ENCODE measurements at regions of chr20 and their contacts with region 1.

Region 1: DNA sequence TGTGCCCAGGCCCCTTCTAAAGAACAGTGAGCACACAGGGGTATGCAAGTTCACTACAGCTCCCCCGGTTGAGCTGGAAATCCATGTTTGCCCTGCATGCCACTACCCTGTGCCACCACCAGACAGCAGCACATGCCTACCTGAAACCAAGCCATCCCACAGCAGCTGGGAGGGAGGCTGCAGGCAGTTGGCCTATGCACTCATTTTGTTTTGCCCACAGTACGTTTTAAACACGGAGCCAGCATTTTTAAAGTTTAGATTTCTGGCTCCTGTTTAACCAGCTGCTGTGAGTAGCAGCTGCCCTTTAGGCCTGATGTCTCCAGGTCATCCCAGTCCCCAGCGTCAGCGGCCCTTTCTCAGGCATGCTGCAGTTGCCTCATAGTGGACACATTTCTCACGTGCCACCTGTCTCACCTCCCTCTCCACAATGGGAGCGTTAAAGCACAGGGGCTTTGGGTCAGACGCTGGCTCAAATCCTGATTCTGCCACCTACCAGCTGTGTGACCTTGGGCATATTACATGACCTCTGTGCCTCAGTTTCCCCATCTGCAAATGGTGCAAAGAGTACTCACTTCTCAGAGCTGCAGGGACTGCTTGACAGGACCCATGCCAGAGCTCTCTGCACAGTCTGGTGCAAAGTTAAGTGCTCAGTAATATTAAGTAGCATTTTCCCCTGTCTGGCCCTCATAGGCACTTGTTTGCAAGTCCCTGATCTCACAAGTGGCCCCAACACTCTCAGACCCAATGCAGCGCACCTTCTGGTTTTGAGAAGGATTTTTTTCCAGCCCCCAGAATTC is 8.1 kb upstream of the UBE2V1 start:
- DNase-seq: peak; percentile 84
- ATAC-seq: peak; percentile 91
- H3K4me3 ChIP-seq: peak overlapping the region; percentile 4 to 57 (median 22); a peak in 3 of 6 replicates
- H3K27ac ChIP-seq: peak overlapping the region; percentile 45
- H3K4me1 ChIP-seq: peaks cover 33% of the 10 kb centered on the region
- H3K27me3 ChIP-seq: no peaks in the 10 kb centered on the region
- CTCF ChIP-seq: peak; percentile 98
- EP300 ChIP-seq: no peak
- POLR2A ChIP-seq: no peak; a peak in 2 of 4 replicates
- RAD21 ChIP-seq: peak; percentile 99

Region 2: DNA sequence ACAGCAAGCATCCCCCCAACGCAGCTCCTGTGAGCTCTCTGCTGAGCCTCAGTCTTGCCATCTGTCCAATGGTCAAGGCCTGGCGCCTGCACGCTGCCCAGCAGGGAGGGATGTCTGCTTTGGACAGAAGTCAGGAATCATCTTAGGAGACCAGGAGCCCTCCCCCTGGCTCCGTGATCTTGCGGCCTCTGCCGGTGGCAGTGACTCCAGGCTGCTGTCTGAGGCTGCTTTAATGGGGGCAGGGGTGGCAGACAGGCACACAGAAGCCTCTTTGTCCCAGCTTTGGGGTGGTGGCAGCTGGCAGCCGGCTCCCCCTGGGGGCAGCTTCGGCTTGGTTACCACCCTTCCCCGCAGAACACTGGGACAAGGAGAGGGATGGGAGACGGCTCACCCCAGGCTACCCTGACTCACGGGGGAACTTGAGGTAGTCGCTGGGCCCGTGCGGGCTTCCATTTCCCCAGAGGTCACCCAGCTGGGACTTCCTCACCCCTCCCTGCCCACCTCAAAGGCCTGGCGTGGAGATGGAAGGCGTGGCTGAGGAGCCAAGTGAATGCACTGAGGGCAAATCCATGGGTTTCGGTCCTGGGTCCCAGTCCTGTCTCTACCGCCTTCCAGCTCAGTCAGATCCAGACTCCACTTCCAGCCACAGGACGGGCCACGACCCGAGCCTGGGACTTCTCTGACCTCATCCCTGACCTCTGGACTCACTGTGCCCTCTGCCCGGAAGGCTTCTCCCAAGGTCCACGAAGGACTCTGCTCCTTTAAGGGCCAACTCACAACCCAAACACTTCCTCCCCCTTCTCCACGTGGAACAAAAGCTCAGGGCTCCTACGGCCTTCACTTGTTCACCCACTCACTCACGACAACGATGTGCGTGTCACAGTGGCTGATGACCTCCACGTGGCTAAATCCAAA is 17.6 kb after region 1 on chr20:
- CTCF ChIA-PET with region 1: interaction called, 10 read pairs
- POLR2A ChIA-PET with region 1: interaction called, 10 read pairs
- in situ Hi-C with region 1: no loop called
- intact Hi-C with region 1: no loop called
- DNase-seq: peak; percentile 73
- ATAC-seq: peak; percentile 68
- H3K4me3 ChIP-seq: peak overlapping the region in 1 of 3 experiments; percentile 25; a peak in 1 of 6 replicates
- H3K27ac ChIP-seq: peak overlapping the region; percentile 33
- H3K4me1 ChIP-seq: peaks cover 40% of the 10 kb centered on the region
- H3K27me3 ChIP-seq: no peaks in the 10 kb centered on the region
- CTCF ChIP-seq: peak; percentile 64
- EP300 ChIP-seq: no peak
- POLR2A ChIP-seq: no peak
- RAD21 ChIP-seq: peak; percentile 66

Region 3: GRCh38 chr20:50153485-50154377 is 32.6 kb after region 1 on chr20 and contains the start of gene PEDS1:
- CTCF ChIA-PET with region 1: no interaction called
- POLR2A ChIA-PET with region 1: interaction called, 43 read pairs
- in situ Hi-C with region 1: no loop called
- intact Hi-C with region 1: no loop called
- DNase-seq: peak; percentile 83
- ATAC-seq: peak; percentile 95
- H3K4me3 ChIP-seq: peak within 1 kb of the TSS; percentile 91 to 98 (median 96)
- H3K27ac ChIP-seq: peak within 1 kb of the TSS; percentile 73
- H3K4me1 ChIP-seq: peaks cover 72% of the 10 kb centered on the region
- H3K27me3 ChIP-seq: peaks cover 0 to 4% of the 10 kb centered on the region in 2 experiments; a peak in 1 of 5 replicates
- CTCF ChIP-seq: no peak
- EP300 ChIP-seq: 0 out of 4 replicates have a peak, but pooled peaks of 1 of the 2 experiments have one; percentile 18
- POLR2A ChIP-seq: peak; percentile 89 to 93
- RAD21 ChIP-seq: peak; percentile 64
- total RNA-seq, gene PEDS1: 21.4 and 30.5 TPM in 2 replicates

Region 4: DNA sequence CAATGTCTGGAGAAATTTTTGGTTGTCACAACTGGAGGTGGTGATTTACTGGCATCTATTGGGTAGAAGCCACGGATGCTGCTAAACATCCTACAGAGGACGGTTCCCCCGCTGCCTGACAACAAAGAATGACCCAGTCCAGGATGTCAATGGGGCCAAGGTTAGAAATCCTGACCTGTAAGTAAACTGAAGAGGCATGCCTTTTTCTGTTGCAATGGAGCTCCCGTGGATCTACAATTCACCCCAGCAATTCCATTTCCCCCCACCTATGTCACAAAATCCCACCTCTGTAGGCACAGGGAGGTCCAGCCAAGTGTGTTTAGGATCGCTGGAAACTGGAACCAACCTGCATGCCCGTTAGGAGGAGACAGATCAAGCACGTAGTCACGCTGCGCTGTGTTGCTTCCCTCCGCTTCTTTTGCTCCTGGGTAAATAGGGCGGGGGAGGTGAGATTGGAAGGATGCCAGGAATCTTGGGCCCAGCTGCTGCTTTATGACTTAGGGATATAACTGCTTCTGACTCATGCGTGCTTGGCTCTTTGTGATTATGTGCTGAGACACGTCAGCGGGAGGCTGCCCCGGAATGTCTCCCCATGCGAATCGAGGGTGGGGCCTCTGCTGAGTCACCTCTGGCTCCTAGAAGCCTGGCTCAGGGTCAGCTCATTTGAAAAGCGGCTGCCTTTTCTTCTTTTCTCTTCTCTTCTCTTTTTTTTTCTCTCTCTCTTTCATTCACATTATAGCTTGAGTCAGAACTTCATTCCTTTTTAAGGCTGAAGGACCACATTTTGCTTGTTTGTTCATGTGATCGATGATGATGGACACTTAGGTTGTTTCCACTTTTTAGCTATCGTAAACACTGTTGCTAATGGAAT is 44.8 kb after region 1 on chr20:
- CTCF ChIA-PET with region 1: interaction called, 115 read pairs
- POLR2A ChIA-PET with region 1: interaction called, 104 read pairs
- in situ Hi-C with region 1: loop called (anchors 5 kb)
- intact Hi-C with region 1: loop called (anchors 1 kb)
- DNase-seq: peak; percentile 100
- ATAC-seq: peak; percentile 92
- H3K4me3 ChIP-seq: peak overlapping the region; percentile 45 to 63 (median 51)
- H3K27ac ChIP-seq: peak overlapping the region; percentile 96
- H3K4me1 ChIP-seq: peaks cover 80% of the 10 kb centered on the region
- H3K27me3 ChIP-seq: no peaks in the 10 kb centered on the region
- CTCF ChIP-seq: peak; percentile 39; the same call in 1 of the 2 replicates
- EP300 ChIP-seq: peak in 1 of 2 experiments; percentile 83
- POLR2A ChIP-seq: peak; percentile 85
- RAD21 ChIP-seq: peak; percentile 49; the same call in 1 of the 2 replicates

Region 5: GRCh38 chr20:50179507-50180016 is 58.5 kb after region 1 on chr20:
- CTCF ChIA-PET with region 1: interaction called, 27 read pairs
- POLR2A ChIA-PET with region 1: interaction called, 11 read pairs
- in situ Hi-C with region 1: no loop called
- intact Hi-C with region 1: loop called (anchors 1 kb)
- DNase-seq: peak; percentile 50
- ATAC-seq: peak; percentile 82
- H3K4me3 ChIP-seq: peak overlapping the region in 1 of 3 experiments; percentile 23; a peak in 1 of 6 replicates
- H3K27ac ChIP-seq: peak overlapping the region; percentile 59
- H3K4me1 ChIP-seq: peaks cover 10% of the 10 kb centered on the region
- H3K27me3 ChIP-seq: no peaks in the 10 kb centered on the region
- CTCF ChIP-seq: 0 out of 2 replicates have a peak, but pooled peaks have one; percentile 44
- EP300 ChIP-seq: no peak
- POLR2A ChIP-seq: no peak
- RAD21 ChIP-seq: no peak

Region 6: DNA sequence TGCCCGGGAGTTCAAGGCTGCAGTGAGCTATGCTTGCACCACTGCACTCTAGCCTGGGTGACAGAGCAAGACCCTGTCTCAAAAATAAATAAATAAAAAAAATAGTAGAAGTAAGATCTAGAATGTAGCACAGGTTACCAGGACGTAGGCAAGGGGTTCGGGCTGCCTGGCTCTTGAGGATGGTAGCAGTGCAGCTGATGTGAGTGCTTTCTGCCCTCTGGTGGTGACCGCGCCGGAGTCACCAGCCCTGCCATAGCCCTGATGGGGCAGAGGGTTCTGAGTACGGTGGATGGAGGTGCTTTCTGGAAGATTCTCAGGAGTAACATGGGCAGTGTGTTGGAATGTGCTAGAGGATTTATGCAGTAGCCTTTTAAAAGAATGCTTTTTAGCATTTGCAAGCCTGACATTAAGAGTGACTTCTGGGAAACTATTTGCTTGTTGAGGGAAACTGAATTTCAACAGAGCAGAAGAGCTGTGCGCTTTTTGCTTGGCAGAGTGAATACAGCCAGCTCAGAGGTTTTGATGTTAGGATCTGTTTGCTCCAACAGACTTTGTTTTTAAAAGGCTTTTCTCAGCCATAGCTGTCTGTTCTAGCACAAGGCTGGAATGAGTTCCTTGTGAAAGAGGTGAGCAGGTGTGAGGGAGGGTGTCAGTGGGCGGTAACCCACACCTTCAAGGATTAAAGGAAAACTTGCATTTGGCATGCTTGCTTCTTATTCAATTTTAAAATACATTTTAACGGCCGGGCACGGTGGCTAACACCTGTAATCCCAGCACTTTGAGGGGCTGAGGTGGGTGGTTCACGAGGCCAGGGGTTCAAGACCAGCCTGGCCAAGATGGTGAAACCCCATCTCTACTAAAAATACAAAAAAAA is 455.0 kb after region 1 on chr20:
- CTCF ChIA-PET with region 1: interaction called, 6 read pairs
- POLR2A ChIA-PET with region 1: no interaction called
- in situ Hi-C with region 1: loop called (anchors 10 kb)
- intact Hi-C with region 1: loop called (anchors 5 kb)
- DNase-seq: peak; percentile 63
- ATAC-seq: peak; percentile 91
- H3K4me3 ChIP-seq: no peak overlapping the region
- H3K27ac ChIP-seq: no peak overlapping the region
- H3K4me1 ChIP-seq: peaks cover 8% of the 10 kb centered on the region
- H3K27me3 ChIP-seq: no peaks in the 10 kb centered on the region
- CTCF ChIP-seq: peak; percentile 93
- EP300 ChIP-seq: no peak
- POLR2A ChIP-seq: no peak
- RAD21 ChIP-seq: peak; percentile 88

Measured in HepG2 (cell line).